Ovary (tissue), 10 donors: ENCODE measurements at regions of chr2 and their contacts with region 1.

Region 1: GRCh38 chr2:27703638-27704341 is 40.1 kb downstream of the SLC4A1AP start:
- DNase-seq: peak; percentile 82 to 93 (median 87)
- H3K4me3 ChIP-seq: no peak overlapping the region
- H3K27ac ChIP-seq: no peak overlapping the region
- H3K4me1 ChIP-seq: peaks cover 20% of the 10 kb centered on the region
- H3K27me3 ChIP-seq: no peaks in the 10 kb centered on the region
- CTCF ChIP-seq: peak; percentile 79 to 95 (median 93)
- EP300 ChIP-seq: no peak
- POLR2A ChIP-seq: no peak

Region 2: GRCh38 chr2:27191053-27191829 is 512.5 kb before region 1 on chr2:
- intact Hi-C with region 1: no loop called
- DNase-seq: peak in 4 of 5 donors; percentile 63 to 83 (median 72)
- H3K4me3 ChIP-seq: no peak overlapping the region
- H3K27ac ChIP-seq: no peak overlapping the region
- H3K4me1 ChIP-seq: no peaks in the 10 kb centered on the region
- H3K27me3 ChIP-seq: no peaks in the 10 kb centered on the region
- CTCF ChIP-seq: peak; percentile 48 to 88 (median 74)
- EP300 ChIP-seq: no peak
- POLR2A ChIP-seq: no peak

Region 3: GRCh38 chr2:27771548-27772335 is 68.0 kb after region 1 on chr2 and contains the start of gene MRPL33:
- intact Hi-C with region 1: loop called in 1 of 4 experiments (anchors 10 kb)
- DNase-seq: peak; percentile 94 to 97 (median 95)
- H3K4me3 ChIP-seq: peak within 1 kb of the TSS; percentile 85
- H3K27ac ChIP-seq: peak within 1 kb of the TSS; percentile 69 to 70
- H3K4me1 ChIP-seq: peaks cover 7% of the 10 kb centered on the region
- H3K27me3 ChIP-seq: no peaks in the 10 kb centered on the region
- CTCF ChIP-seq: no peak
- EP300 ChIP-seq: no peak
- POLR2A ChIP-seq: peak; percentile 75
- total RNA-seq, gene MRPL33: 50.5 to 185 (median 62.4) TPM

Region 4: GRCh38 chr2:28452534-28453081 is 748.8 kb after region 1 on chr2:
- intact Hi-C with region 1: loop called (anchors 2 to 10 kb)
- DNase-seq: peak; percentile 60 to 83 (median 78)
- H3K4me3 ChIP-seq: no peak overlapping the region
- H3K27ac ChIP-seq: no peak overlapping the region
- H3K4me1 ChIP-seq: no peaks in the 10 kb centered on the region
- H3K27me3 ChIP-seq: no peaks in the 10 kb centered on the region
- CTCF ChIP-seq: peak; percentile 56 to 89 (median 88)
- EP300 ChIP-seq: no peak
- POLR2A ChIP-seq: peak; percentile 25

Region 5: GRCh38 chr2:28934769-28935168 is 1231.0 kb after region 1 on chr2:
- intact Hi-C with region 1: no loop called
- DNase-seq: no peak
- H3K4me3 ChIP-seq: no peak overlapping the region
- H3K27ac ChIP-seq: no peak overlapping the region
- H3K4me1 ChIP-seq: no peaks in the 10 kb centered on the region
- H3K27me3 ChIP-seq: no peaks in the 10 kb centered on the region
- CTCF ChIP-seq: no peak
- EP300 ChIP-seq: no peak
- POLR2A ChIP-seq: no peak